ENCODE measurements at regions of chr1 and their contacts with region 1.

Region 1: DNA sequence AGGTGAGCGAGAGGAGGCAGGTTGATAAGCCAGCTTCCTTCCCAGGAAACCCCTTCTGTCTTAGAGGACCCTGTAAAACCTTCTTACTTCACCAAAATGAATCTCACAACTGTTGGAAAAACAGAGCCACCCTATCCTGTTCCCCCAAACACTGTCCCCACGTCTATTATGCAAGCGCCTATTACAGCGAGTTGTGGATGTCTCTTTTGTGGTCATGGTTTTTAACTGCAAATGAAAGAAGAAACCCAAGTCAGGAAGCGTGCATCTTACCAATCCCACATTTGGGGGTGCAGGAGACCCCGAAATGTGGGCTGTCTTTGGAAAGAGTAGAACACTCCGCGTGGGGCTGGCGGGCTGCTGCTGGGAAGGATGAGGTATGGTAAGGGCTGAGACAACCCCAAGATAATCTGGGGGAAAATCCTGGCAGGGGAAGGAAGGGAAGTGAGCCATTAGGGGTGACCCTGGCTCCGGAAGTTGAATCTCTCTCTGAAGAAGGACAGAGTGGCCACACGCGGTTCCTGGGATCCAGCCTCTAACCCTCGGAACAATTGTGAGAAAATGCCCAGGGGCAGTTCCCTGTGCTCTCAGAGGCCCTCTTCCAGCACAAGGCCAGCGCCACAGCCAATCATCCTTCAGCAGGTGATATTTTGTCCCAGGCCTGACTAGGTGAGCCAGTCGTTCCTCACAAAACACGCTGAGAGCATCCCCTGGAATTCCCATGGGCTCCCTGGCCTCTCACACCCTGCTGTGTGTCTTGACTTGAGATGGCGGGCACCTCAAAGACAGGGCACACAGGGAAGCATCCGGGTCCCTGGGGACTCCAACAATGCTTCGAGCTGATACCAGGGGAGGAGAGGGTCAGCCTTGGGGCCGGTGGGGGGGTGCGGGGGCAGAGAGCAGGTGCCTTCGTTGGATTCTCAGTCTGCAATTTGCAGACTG is 168.5 kb upstream of the IRF2BP2 start:
- DNase-seq: no peak
- ATAC-seq: no peak
- H3K4me3 Mint-ChIP-seq: no peak overlapping the region
- H3K27ac Mint-ChIP-seq: no peak overlapping the region
- H3K4me1 Mint-ChIP-seq: peaks cover 4% of the 10 kb centered on the region
- H3K27me3 Mint-ChIP-seq: no peaks in the 10 kb centered on the region
- CTCF ChIP-seq: no peak

Region 2: DNA sequence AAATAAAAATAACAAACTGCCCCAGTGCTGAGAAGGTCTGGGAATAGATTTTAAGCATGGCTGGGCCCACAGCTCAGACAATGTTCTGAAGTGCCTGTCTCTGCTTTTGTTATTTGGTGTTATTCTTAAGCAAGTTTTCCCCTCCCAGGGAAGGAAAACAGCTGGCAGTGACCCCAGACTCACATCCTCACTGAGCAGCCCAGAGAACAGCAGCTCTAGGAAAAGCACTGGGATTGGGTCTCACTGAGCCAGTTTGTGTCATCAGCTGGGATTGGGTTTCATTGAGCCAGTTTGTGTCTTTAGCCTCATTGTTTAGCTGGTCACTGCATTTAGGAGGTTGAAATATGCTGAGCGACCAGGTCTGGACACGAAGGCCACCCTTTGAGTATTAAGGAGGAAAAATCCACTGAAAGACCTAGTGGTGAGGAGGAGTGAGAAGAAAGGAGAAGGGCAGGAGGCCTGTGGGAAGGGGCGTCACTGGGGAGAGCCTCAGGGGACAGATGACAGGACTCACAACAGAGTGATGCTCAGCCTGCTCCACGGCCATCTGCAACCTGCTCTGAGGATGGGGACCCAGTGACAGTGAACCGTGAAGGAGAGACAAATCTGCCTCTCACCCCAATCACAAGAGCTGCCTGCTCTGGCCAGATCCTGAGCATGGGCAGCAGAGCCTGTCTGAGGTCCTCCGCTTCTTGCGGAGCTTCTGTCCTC is 246.4 kb after region 1 on chr1:
- CTCF ChIA-PET with region 1: no interaction called
- POLR2A ChIA-PET with region 1: interaction called, 11 read pairs
- intact Hi-C with region 1: no loop called
- DNase-seq: no peak
- ATAC-seq: peak; percentile 76
- H3K4me3 Mint-ChIP-seq: no peak overlapping the region
- H3K27ac Mint-ChIP-seq: peak overlapping the region; percentile 27
- H3K4me1 Mint-ChIP-seq: peaks cover 30% of the 10 kb centered on the region
- H3K27me3 Mint-ChIP-seq: no peaks in the 10 kb centered on the region
- CTCF ChIP-seq: no peak